ENCODE measurements at regions of chr1 and their contacts with region 1.

Region 1: GRCh38 chr1:198713081-198713480 is 74.2 kb downstream of the PTPRC start:
- DNase-seq: no peak
- H3K4me3 Mint-ChIP-seq: no peak overlapping the region
- H3K27ac Mint-ChIP-seq: peak overlapping the region; percentile 2
- H3K4me1 Mint-ChIP-seq: peaks cover 30% of the 10 kb centered on the region
- H3K27me3 Mint-ChIP-seq: no peaks in the 10 kb centered on the region

Region 2: DNA sequence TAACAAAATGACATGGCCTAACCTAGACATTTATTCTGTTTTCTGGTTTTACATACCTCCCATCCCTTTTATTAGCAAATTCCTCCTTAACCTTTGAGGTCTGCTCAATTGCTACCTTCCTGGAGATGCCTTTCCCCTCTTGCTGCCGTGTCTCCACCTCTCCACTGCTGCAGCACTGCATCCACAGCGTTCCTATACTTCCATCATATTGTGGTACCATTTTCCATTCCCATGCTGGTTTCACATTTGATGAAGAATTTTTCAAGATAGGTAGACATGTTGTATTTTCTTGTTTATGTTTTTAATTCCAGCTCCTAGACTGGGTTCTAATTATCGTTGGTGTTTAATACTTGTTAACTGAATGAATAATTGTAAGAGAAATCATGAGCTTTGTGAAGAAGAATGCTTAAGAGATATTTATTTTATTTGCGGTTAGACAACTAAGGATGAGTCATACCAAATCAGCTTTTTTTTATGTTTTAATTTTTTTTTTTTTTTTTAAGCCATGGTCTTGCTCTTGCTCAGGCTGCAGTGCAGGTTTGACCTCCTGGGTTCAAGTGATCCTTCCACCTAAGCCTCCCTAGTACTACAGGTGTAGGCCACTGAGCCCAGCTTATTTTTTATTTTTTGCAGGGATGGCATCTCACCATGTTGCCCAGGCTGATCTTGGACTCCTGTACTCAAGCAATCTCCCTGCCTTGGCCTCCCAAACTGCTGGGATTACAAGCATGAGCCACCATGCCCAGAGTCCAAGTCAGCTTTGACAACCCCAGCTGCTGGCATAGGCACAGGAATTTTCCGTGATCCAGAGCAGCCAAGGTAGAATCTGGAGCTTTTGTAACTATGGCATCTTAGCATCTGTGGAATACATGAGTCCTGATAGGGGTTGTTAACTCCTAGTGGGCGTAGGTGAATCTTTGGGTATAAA is 216.6 kb before region 1 on chr1:
- intact Hi-C with region 1: no loop called
- DNase-seq: no peak
- H3K4me3 Mint-ChIP-seq: no peak overlapping the region
- H3K27ac Mint-ChIP-seq: no peak overlapping the region
- H3K4me1 Mint-ChIP-seq: peaks cover 7% of the 10 kb centered on the region
- H3K27me3 Mint-ChIP-seq: peaks cover 3% of the 10 kb centered on the region

Region 3: GRCh38 chr1:198726455-198726854 is 13.4 kb after region 1 on chr1:
- intact Hi-C with region 1: loop called (anchors 2 kb)
- DNase-seq: no peak
- H3K4me3 Mint-ChIP-seq: no peak overlapping the region
- H3K27ac Mint-ChIP-seq: peak overlapping the region; percentile 22
- H3K4me1 Mint-ChIP-seq: peaks cover 63% of the 10 kb centered on the region
- H3K27me3 Mint-ChIP-seq: no peaks in the 10 kb centered on the region

Region 4: GRCh38 chr1:198749279-198749678 is 36.2 kb after region 1 on chr1:
- intact Hi-C with region 1: loop called (anchors 5 kb)
- DNase-seq: no peak
- H3K4me3 Mint-ChIP-seq: no peak overlapping the region
- H3K27ac Mint-ChIP-seq: peak overlapping the region; percentile 30
- H3K4me1 Mint-ChIP-seq: peaks cover 21% of the 10 kb centered on the region
- H3K27me3 Mint-ChIP-seq: no peaks in the 10 kb centered on the region